Activated CD4-positive, alpha-beta memory T cell treated with anti-CD3 and anti-CD28 coated beads for 36 hours (primary cell): ENCODE measurements at regions of chr9 and their contacts with region 1.

Region 1: DNA sequence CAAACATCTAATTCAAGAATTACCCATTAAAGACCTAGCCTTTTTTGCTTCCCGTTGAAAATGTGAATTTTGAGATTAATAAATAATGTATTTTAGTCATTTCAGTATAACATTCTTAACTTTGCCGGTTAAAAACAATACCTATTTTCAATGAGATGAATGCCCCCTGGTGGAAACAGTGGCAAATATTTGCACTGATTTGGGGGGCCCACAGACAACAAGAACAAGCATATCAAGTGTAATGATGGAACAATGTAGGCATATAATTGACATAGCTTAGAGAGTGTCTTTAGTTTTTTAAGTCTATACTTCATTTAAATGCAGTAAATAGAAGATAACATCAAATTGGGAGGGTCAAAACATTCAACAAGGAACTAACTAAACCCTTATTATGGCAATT is 111.9 kb downstream of the NTRK2 start:
- DNase-seq: peak; percentile 21
- H3K4me3 Mint-ChIP-seq: no peak overlapping the region
- H3K27ac Mint-ChIP-seq: no peak overlapping the region
- H3K4me1 Mint-ChIP-seq: no peaks in the 10 kb centered on the region
- H3K27me3 Mint-ChIP-seq: peaks cover 4% of the 10 kb centered on the region

Region 2: DNA sequence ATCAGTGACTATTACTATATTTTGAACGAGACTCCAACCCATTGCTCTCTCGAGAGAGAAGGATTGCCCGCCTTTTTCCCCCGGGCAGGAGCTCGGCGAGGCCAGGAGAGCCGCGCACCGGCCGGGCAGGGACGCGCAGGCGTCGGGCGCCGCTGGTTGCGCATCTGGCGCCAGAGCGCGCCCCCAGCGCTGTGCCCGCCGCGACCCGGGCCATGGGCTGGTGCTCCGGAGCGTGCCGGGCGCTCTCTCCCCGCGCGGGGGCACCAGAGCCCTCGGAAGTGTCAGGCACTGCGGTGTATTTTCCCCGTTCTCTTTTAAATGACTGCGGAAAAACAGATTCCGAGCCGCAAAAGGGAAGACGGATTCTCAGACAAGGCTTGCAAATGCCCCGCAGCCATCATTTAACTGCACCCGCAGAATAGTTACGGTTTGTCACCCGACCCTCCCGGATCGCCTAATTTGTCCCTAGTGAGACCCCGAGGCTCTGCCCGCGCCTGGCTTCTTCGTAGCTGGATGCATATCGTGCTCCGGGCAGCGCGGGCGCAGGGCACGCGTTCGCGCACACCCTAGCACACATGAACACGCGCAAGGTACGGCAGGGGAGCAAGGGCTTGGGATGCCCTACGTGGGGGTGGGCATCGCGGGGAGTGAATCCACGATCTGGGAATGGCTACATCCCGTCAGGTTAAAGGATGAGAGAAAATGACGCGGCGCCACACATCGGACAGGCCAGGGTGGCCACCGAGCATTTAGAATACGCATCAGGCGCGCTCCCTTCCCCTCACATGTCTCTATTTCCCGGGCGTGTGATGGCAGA is 113.1 kb before region 1 on chr9:
- CTCF ChIA-PET with region 1: interaction called, 10 read pairs
- POLR2A ChIA-PET with region 1: no interaction called
- intact Hi-C with region 1: no loop called
- DNase-seq: peak; percentile 63
- H3K4me3 Mint-ChIP-seq: peak overlapping the region; percentile 48
- H3K27ac Mint-ChIP-seq: no peak overlapping the region
- H3K4me1 Mint-ChIP-seq: peaks cover 20% of the 10 kb centered on the region
- H3K27me3 Mint-ChIP-seq: peaks cover 46% of the 10 kb centered on the region

Region 3: GRCh38 chr9:84697509-84698114 is 83.8 kb before region 1 on chr9:
- CTCF ChIA-PET with region 1: interaction called, 82 read pairs
- POLR2A ChIA-PET with region 1: no interaction called
- intact Hi-C with region 1: loop called (anchors 1 kb)
- DNase-seq: peak; percentile 72
- H3K4me3 Mint-ChIP-seq: no peak overlapping the region
- H3K27ac Mint-ChIP-seq: no peak overlapping the region
- H3K4me1 Mint-ChIP-seq: peaks cover 4% of the 10 kb centered on the region
- H3K27me3 Mint-ChIP-seq: peaks cover 3% of the 10 kb centered on the region

Region 4: DNA sequence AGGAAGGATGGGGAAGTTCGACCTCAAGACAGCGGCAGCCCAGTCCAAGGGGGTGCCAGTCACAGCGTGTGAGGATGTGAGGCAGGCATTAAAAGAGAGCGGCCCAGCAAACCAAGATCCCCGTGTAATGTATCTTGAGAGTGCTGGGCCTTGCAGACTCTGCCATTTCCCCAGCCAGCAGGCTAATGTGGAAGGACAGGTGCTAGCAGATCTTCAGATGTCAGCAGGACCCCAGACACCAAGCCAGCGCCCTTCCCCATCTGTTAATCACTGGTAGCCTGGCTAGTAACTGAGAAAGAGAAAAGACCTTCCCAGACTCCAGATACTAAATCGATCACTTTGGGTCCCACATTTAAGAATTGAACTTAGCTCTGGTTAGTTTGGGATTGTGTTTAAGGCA is 49.8 kb before region 1 on chr9:
- CTCF ChIA-PET with region 1: no interaction called
- POLR2A ChIA-PET with region 1: no interaction called
- intact Hi-C with region 1: no loop called
- DNase-seq: no peak
- H3K4me3 Mint-ChIP-seq: no peak overlapping the region
- H3K27ac Mint-ChIP-seq: no peak overlapping the region
- H3K4me1 Mint-ChIP-seq: no peaks in the 10 kb centered on the region
- H3K27me3 Mint-ChIP-seq: peaks cover 2% of the 10 kb centered on the region

Region 5: GRCh38 chr9:84761137-84761810 is 20.2 kb before region 1 on chr9:
- CTCF ChIA-PET with region 1: no interaction called
- POLR2A ChIA-PET with region 1: no interaction called
- intact Hi-C with region 1: no loop called
- DNase-seq: peak; percentile 17
- H3K4me3 Mint-ChIP-seq: no peak overlapping the region
- H3K27ac Mint-ChIP-seq: peak overlapping the region; percentile 49
- H3K4me1 Mint-ChIP-seq: peaks cover 28% of the 10 kb centered on the region
- H3K27me3 Mint-ChIP-seq: no peaks in the 10 kb centered on the region

Region 6: GRCh38 chr9:84823421-84824271 is 42.2 kb after region 1 on chr9:
- CTCF ChIA-PET with region 1: no interaction called
- POLR2A ChIA-PET with region 1: no interaction called
- intact Hi-C with region 1: no loop called
- DNase-seq: no peak
- H3K4me3 Mint-ChIP-seq: no peak overlapping the region
- H3K27ac Mint-ChIP-seq: no peak overlapping the region
- H3K4me1 Mint-ChIP-seq: no peaks in the 10 kb centered on the region
- H3K27me3 Mint-ChIP-seq: peaks cover 4% of the 10 kb centered on the region